ENCODE measurements at regions of chr7 and their contacts with region 1.

Region 1: GRCh38 chr7:112869111-112869757 is 79.0 kb upstream of the TMEM168 start:
- DNase-seq: no peak
- ATAC-seq: peak; percentile 76
- H3K4me3 Mint-ChIP-seq: no peak overlapping the region
- H3K27ac Mint-ChIP-seq: no peak overlapping the region
- H3K4me1 Mint-ChIP-seq: peaks cover 42% of the 10 kb centered on the region
- H3K27me3 Mint-ChIP-seq: no peaks in the 10 kb centered on the region
- CTCF ChIP-seq: peak; percentile 61

Region 2: DNA sequence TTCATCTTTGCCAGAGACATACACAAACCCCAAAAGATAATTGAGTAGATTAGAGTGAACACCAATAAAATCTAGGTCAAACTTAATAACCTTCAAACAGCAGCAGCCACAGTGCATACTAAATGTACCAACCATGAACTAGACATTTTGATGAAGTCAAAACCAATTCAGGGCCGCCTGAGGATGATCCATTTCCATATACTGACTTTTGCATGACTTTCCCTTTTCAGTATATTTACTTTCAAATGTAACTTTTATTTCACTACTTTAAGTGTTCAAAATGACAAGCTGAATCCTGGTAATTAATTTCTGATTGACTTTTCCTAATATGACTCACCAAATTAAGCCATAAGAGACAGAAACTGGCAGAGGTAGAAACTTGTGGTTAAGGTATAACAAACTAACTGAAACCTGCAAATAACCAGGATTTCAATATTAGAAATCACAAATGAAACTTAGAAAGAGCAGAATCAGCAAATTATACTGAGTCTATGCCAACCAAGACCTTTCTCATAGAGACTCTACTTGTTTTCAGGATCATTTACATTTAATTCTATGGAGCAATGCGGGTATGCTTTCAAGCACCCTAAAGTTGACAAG is 1950.2 kb before region 1 on chr7:
- CTCF ChIA-PET with region 1: no interaction called
- POLR2A ChIA-PET with region 1: no interaction called
- intact Hi-C with region 1: no loop called
- DNase-seq: no peak
- ATAC-seq: no peak
- H3K4me3 Mint-ChIP-seq: no peak overlapping the region
- H3K27ac Mint-ChIP-seq: no peak overlapping the region
- H3K4me1 Mint-ChIP-seq: no peaks in the 10 kb centered on the region
- H3K27me3 Mint-ChIP-seq: no peaks in the 10 kb centered on the region
- CTCF ChIP-seq: no peak

Region 3: GRCh38 chr7:112398534-112398933 is 470.7 kb before region 1 on chr7:
- CTCF ChIA-PET with region 1: no interaction called
- POLR2A ChIA-PET with region 1: no interaction called
- intact Hi-C with region 1: loop called (anchors 10 kb)
- DNase-seq: no peak
- ATAC-seq: no peak
- H3K4me3 Mint-ChIP-seq: no peak overlapping the region
- H3K27ac Mint-ChIP-seq: no peak overlapping the region
- H3K4me1 Mint-ChIP-seq: no peaks in the 10 kb centered on the region
- H3K27me3 Mint-ChIP-seq: peaks cover 29% of the 10 kb centered on the region
- CTCF ChIP-seq: no peak

Region 4: DNA sequence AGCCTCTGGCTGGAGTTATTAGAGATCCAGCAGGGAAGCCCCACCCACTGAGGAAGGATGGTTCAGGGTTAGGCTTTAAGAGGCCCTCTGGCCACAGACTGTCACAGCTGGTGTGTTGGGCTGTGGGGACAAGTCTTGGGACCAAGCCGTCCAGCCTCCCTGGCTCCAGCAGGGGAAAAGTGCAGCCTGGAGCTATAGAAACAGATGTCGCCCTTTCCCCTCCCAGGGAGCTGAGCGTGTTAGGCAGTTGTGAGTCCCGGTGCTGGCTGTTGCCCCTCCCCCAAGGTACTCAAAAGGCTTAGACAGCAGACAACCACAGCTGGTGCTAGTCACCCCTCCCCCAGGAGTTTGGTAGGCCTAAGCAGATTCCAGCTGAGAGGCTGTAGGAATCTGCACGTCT is 222.5 kb before region 1 on chr7:
- CTCF ChIA-PET with region 1: no interaction called
- POLR2A ChIA-PET with region 1: no interaction called
- intact Hi-C with region 1: no loop called
- DNase-seq: no peak
- ATAC-seq: no peak
- H3K4me3 Mint-ChIP-seq: no peak overlapping the region
- H3K27ac Mint-ChIP-seq: no peak overlapping the region
- H3K4me1 Mint-ChIP-seq: no peaks in the 10 kb centered on the region
- H3K27me3 Mint-ChIP-seq: peaks cover 6% of the 10 kb centered on the region
- CTCF ChIP-seq: no peak

Region 5: GRCh38 chr7:112782494-112782893 is 86.7 kb before region 1 on chr7:
- CTCF ChIA-PET with region 1: no interaction called
- POLR2A ChIA-PET with region 1: no interaction called
- intact Hi-C with region 1: no loop called
- DNase-seq: no peak
- ATAC-seq: no peak
- H3K4me3 Mint-ChIP-seq: no peak overlapping the region
- H3K27ac Mint-ChIP-seq: no peak overlapping the region
- H3K4me1 Mint-ChIP-seq: peaks cover 5% of the 10 kb centered on the region
- H3K27me3 Mint-ChIP-seq: no peaks in the 10 kb centered on the region
- CTCF ChIP-seq: no peak

Region 6: DNA sequence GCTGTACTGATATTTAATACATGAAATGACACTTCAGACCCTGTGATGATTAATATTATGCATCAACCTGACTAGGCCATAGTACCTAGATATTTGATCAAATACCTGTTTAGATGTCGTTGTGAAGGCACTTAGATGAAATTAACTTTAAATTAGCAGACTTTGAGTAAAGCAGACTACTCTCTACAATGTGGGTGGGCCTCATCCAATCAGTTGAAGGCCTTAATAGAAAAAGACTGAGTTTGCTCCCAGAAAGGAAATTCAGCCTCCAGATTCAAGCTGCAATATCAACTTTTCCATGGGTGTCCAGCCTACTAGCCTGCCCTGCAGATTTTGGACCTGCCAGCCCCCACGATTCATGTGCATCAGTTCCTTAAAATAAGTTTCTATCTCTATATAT is 10.4 kb before region 1 on chr7:
- CTCF ChIA-PET with region 1: interaction called, 5 read pairs
- POLR2A ChIA-PET with region 1: no interaction called
- intact Hi-C with region 1: loop called (anchors 2 kb)
- DNase-seq: no peak
- ATAC-seq: no peak
- H3K4me3 Mint-ChIP-seq: no peak overlapping the region
- H3K27ac Mint-ChIP-seq: no peak overlapping the region
- H3K4me1 Mint-ChIP-seq: no peaks in the 10 kb centered on the region
- H3K27me3 Mint-ChIP-seq: no peaks in the 10 kb centered on the region
- CTCF ChIP-seq: no peak